B cell (primary cell): ENCODE measurements at regions of chr6 and their contacts with region 1.

Region 1: DNA sequence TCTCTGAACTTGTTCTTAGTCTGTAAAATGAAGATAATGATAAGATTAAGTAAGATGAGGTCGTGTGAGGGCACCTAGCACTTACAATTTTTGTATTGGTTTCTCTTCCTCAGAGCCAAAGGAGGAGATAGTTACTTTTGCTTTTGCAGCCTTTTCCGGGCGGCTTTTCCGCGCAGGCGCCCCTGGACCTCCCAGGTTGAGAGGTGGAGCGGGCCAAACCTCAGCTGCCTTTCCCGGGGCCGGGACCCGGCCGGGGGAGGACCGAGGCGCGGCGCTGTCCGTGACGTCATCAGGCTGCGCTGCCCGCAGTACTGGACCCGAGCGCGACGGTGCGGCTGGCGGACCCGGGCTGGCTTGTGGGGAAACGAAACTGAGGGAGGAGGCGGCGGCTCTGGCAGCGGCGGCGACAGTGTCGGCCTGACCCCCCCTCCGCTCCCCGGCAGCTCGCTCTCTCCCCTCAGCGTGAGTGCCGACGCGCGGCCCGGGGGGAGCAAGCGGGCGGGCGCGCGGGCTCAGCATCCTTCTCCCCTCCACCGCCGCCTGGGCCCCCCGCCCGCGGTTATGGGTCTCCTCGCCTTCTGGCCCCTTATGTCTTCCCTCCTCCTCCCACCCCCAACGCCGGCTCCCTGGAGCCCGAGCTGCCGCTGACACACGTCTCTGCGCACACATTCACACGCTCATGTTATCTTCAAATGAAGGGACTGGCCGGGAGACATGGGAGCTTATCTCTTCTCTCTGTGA is at the start of gene CMTR1:
- DNase-seq: peak; percentile 98
- ATAC-seq: peak; percentile 88
- H3K4me3 ChIP-seq: peak within 1 kb of the TSS; percentile 88 to 97 (median 94)
- H3K4me3 Mint-ChIP-seq: peak within 1 kb of the TSS; percentile 96
- H3K27ac ChIP-seq: peak within 1 kb of the TSS; percentile 92 to 94
- H3K27ac Mint-ChIP-seq: peak within 1 kb of the TSS; percentile 96
- H3K4me1 ChIP-seq: peaks cover 17 to 26% of the 10 kb centered on the region in 2 donors
- H3K4me1 Mint-ChIP-seq: peaks cover 40% of the 10 kb centered on the region
- H3K27me3 ChIP-seq: no peaks in the 10 kb centered on the region
- H3K27me3 Mint-ChIP-seq: peaks cover under 1% of the 10 kb centered on the region
- CTCF ChIP-seq: no peak
- total RNA-seq, gene CMTR1: 81.3 and 82.9 TPM in 2 replicates

Region 2: GRCh38 chr6:37324131-37325033 is 108.7 kb before region 1 on chr6:
- CTCF ChIA-PET with region 1: interaction called, 12 read pairs
- POLR2A ChIA-PET with region 1: no interaction called
- intact Hi-C with region 1: loop called (anchors 2 kb)
- DNase-seq: no peak
- ATAC-seq: no peak
- H3K4me3 ChIP-seq: no peak overlapping the region
- H3K4me3 Mint-ChIP-seq: no peak overlapping the region
- H3K27ac ChIP-seq: no peak overlapping the region
- H3K27ac Mint-ChIP-seq: no peak overlapping the region
- H3K4me1 ChIP-seq: no peaks in the 10 kb centered on the region
- H3K4me1 Mint-ChIP-seq: peaks cover 2% of the 10 kb centered on the region
- H3K27me3 ChIP-seq: no peaks in the 10 kb centered on the region
- H3K27me3 Mint-ChIP-seq: no peaks in the 10 kb centered on the region
- CTCF ChIP-seq: no peak

Region 3: DNA sequence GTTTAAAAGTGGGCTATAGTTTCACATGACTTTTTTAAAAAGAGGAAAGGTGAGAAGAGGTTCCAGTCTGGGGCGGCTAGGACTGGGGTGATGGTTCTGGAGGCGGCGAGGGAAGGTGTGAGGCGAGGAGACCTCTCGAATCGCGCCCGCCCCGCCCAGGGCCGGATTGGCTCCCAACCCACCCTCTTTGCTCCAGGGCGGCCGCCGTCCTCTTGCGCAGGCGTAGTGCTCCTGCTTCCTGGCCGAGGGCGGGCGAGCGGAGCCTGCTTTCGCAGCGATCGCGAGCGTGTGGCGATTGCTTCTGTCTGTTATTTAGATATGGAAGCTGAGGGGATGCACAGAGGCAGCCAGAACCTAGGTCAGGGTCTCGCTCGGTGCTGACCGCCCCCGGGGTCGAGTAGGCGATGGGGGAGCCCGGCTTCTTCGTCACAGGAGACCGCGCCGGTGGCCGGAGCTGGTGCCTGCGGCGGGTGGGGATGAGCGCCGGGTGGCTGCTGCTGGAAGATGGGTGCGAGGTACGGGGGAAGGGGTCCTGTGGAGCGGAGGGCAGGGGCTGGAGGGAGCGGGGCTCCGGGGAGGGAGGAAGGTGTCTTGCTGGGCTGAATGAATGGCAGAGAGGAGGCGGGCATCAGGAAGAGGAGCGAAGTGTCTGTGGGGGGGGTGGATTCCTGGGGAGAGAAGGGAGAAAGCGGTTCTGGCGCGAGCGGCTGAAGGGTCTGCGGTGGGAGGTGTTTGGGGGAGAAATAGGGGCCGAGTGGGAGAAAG is 79.1 kb before region 1 on chr6 and contains the start of gene RNF8:
- CTCF ChIA-PET with region 1: interaction called, 3 read pairs
- POLR2A ChIA-PET with region 1: interaction called, 5 read pairs
- intact Hi-C with region 1: loop called (anchors 1 kb)
- DNase-seq: peak; percentile 90
- ATAC-seq: peak; percentile 98
- H3K4me3 ChIP-seq: peak within 1 kb of the TSS; percentile 44 to 98 (median 92)
- H3K4me3 Mint-ChIP-seq: peak within 1 kb of the TSS; percentile 96
- H3K27ac ChIP-seq: peak within 1 kb of the TSS; percentile 34 to 83
- H3K27ac Mint-ChIP-seq: peak within 1 kb of the TSS; percentile 87
- H3K4me1 ChIP-seq: peaks cover 11 to 13% of the 10 kb centered on the region in 2 donors
- H3K4me1 Mint-ChIP-seq: peaks cover 30% of the 10 kb centered on the region
- H3K27me3 ChIP-seq: no peaks in the 10 kb centered on the region
- H3K27me3 Mint-ChIP-seq: no peaks in the 10 kb centered on the region
- CTCF ChIP-seq: no peak
- total RNA-seq, gene RNF8: 16.9 and 18.8 TPM in 2 replicates

Region 4: GRCh38 chr6:37381579-37381978 is 51.5 kb before region 1 on chr6:
- CTCF ChIA-PET with region 1: no interaction called
- POLR2A ChIA-PET with region 1: interaction called, 3 read pairs
- intact Hi-C with region 1: loop called (anchors 1 kb)
- DNase-seq: peak; percentile 67
- ATAC-seq: peak; percentile 28
- H3K4me3 ChIP-seq: no peak overlapping the region
- H3K4me3 Mint-ChIP-seq: no peak overlapping the region
- H3K27ac ChIP-seq: no peak overlapping the region
- H3K27ac Mint-ChIP-seq: no peak overlapping the region
- H3K4me1 ChIP-seq: peaks cover 8 to 26% of the 10 kb centered on the region in 2 donors
- H3K4me1 Mint-ChIP-seq: peaks cover 23% of the 10 kb centered on the region
- H3K27me3 ChIP-seq: no peaks in the 10 kb centered on the region
- H3K27me3 Mint-ChIP-seq: no peaks in the 10 kb centered on the region
- CTCF ChIP-seq: peak; percentile 75

Region 5: DNA sequence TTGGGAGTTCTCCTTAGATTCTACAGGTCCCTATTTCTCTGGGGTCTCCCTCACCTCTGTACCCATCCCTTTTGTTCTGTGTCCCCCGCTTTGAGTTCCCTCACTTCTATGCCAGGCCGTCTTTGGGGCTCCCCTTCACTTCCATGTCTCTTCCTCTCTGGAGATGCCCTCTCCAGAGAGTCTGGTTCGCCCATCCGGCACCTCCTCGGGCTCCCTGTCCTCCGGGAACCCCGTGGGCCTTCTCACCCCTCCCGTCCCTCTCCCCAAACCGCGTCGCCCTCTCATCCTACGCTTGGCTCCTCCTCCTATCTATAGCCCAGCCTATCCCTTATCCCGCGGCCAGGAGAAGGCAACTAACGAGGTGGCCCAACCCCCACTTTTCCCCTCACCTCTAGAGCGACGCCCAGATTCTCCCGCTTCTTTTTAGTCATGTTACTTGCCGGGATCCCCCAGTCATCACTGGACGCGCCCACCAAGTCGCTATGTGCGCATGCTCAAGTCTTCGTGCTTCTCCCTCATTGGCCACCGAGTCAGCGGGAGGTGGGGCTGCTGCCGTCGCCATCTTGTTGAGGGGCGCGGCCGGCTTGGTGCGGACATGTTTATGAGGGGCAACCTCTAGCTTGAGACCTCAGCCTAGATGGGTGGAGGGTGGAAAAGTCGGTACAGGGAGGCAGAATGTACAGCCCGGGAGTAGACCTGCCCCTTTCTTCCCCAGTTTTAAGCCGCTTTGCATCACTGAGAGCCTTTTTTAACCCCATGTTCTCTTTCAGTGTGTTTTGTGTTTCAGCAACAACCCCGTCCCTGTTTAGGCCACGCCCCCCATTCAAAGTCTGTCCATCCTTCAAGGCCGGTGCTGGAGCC is 66.6 kb after region 1 on chr6 and contains the start of gene CCDC167:
- CTCF ChIA-PET with region 1: no interaction called
- POLR2A ChIA-PET with region 1: interaction called, 3 read pairs
- intact Hi-C with region 1: loop called (anchors 2 kb)
- DNase-seq: peak; percentile 96
- ATAC-seq: peak; percentile 91
- H3K4me3 ChIP-seq: peak within 1 kb of the TSS; percentile 70 to 100 (median 93)
- H3K4me3 Mint-ChIP-seq: peak within 1 kb of the TSS; percentile 95
- H3K27ac ChIP-seq: peak within 1 kb of the TSS; percentile 69 to 90
- H3K27ac Mint-ChIP-seq: peak within 1 kb of the TSS; percentile 88
- H3K4me1 ChIP-seq: peaks cover 46 to 67% of the 10 kb centered on the region in 2 donors
- H3K4me1 Mint-ChIP-seq: peaks cover 67% of the 10 kb centered on the region
- H3K27me3 ChIP-seq: no peaks in the 10 kb centered on the region
- H3K27me3 Mint-ChIP-seq: no peaks in the 10 kb centered on the region
- CTCF ChIP-seq: no peak
- total RNA-seq, gene CCDC167: 9.7 and 11.1 TPM in 2 replicates

Region 6: GRCh38 chr6:37698261-37699137 is 265.4 kb after region 1 on chr6:
- CTCF ChIA-PET with region 1: no interaction called
- POLR2A ChIA-PET with region 1: interaction called, 3 read pairs
- intact Hi-C with region 1: loop called (anchors 1 kb)
- DNase-seq: peak; percentile 83
- ATAC-seq: peak; percentile 37
- H3K4me3 ChIP-seq: peak overlapping the region; percentile 40 to 72 (median 60)
- H3K4me3 Mint-ChIP-seq: peak overlapping the region; percentile 88
- H3K27ac ChIP-seq: no peak overlapping the region
- H3K27ac Mint-ChIP-seq: peak overlapping the region; percentile 90
- H3K4me1 ChIP-seq: peaks cover 24 to 25% of the 10 kb centered on the region in 2 donors
- H3K4me1 Mint-ChIP-seq: peaks cover 26% of the 10 kb centered on the region
- H3K27me3 ChIP-seq: peaks cover 0 to 37% (median 18%) of the 10 kb centered on the region in 4 experiments
- H3K27me3 Mint-ChIP-seq: peaks cover 27% of the 10 kb centered on the region
- CTCF ChIP-seq: no peak

Region 7: GRCh38 chr6:38702558-38703397 is 1269.7 kb after region 1 on chr6 and contains the start of gene GLO1:
- CTCF ChIA-PET with region 1: no interaction called
- POLR2A ChIA-PET with region 1: no interaction called
- intact Hi-C with region 1: loop called (anchors 5 kb)
- DNase-seq: peak; percentile 96
- ATAC-seq: peak; percentile 100
- H3K4me3 ChIP-seq: peak within 1 kb of the TSS; percentile 52 to 92 (median 88)
- H3K4me3 Mint-ChIP-seq: peak within 1 kb of the TSS; percentile 91
- H3K27ac ChIP-seq: peak within 1 kb of the TSS; percentile 91 to 92
- H3K27ac Mint-ChIP-seq: peak within 1 kb of the TSS; percentile 91
- H3K4me1 ChIP-seq: peaks cover 3 to 5% of the 10 kb centered on the region in 2 donors
- H3K4me1 Mint-ChIP-seq: peaks cover 20% of the 10 kb centered on the region
- H3K27me3 ChIP-seq: peaks cover 0 to 6% (median 4%) of the 10 kb centered on the region in 4 experiments
- H3K27me3 Mint-ChIP-seq: peaks cover 12% of the 10 kb centered on the region
- CTCF ChIP-seq: no peak
- total RNA-seq, gene GLO1: 31.6 and 32.6 TPM in 2 replicates